GM13977 (cell line): ENCODE measurements at regions of chr7 and their contacts with region 1.

Region 1: DNA sequence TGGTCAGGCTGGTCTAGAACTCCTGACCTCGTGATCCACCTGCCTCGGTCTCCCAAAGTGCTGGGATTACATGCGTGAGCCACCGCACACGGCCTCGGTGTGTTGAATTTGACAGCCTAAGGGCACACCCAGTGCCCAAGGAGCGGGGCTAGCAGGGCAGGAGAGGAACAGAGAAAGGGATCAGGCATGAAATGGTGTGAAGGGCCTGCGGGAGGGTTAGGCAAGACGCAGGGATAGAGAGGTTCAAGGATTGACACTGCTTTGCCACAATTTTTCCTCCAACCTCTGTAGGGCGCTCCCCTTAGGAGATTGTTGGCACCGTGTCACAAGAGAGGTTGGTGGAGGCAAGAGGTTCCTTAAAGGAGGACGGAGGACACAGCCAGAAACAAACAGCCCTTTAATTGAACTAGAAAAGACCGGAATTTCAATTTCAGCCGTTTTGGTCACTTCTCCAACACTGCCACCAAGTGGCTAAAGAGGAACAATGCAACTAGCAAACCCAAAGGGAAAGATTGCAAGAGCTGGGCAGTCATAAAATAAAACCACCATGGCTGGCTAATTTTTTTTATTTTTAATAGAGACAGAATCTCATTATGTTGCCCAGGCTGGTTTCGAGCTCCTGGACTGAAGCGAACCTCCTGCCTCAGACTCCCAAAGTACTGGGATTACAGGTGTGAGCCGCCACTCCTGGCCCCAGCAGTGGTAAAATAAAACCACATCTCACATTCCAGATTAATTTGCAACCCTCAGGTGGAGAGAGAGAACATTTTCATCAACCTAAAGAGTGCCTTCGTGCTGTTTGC is 6.9 kb upstream of the CREB3L2 start:
- DNase-seq: peak; percentile 44
- CTCF ChIP-seq: peak; percentile 86

Region 2: GRCh38 chr7:137209151-137209817 is 799.5 kb before region 1 on chr7:
- in situ Hi-C with region 1: no loop called
- DNase-seq: no peak
- CTCF ChIP-seq: no peak

Region 3: GRCh38 chr7:137898839-137899721 is 109.7 kb before region 1 on chr7:
- in situ Hi-C with region 1: loop called (anchors 5 kb)
- DNase-seq: peak; percentile 68
- CTCF ChIP-seq: peak; percentile 98

Region 4: DNA sequence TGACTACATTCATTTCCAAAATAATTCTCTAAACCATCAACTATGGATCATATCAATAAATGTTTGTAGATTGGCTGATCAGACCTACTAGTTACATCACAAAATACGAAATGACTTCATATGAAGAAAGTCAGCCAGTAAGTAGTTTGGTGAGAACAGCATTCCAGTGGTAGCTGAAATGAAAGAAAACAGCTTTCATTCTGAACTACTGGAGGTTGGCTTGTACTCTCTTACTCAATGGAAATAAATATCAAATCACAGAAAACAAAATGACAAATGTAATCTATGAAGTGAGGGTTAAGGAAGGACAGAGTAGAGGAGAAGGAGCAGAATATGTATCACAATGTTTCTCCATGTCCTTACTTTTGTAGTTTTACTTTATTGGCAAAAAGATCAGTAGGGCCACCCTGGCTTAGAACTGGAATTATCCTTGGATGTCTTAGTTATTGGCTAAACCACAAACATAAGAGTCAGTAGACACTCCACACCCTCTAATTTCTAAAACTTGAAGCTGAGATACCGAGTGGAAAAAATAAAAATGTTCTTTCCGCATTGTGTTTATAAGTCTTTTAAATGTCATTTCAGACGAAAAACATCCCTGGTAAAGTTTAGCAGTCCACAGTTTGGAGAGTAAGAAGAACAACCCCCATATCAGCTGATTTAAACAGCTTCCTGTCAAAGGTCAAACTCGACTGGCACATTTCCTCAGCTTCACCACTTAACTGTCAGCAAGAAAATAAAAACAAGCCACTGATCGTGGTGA is 87.9 kb before region 1 on chr7:
- in situ Hi-C with region 1: no loop called
- DNase-seq: no peak
- CTCF ChIP-seq: no peak

Region 5: DNA sequence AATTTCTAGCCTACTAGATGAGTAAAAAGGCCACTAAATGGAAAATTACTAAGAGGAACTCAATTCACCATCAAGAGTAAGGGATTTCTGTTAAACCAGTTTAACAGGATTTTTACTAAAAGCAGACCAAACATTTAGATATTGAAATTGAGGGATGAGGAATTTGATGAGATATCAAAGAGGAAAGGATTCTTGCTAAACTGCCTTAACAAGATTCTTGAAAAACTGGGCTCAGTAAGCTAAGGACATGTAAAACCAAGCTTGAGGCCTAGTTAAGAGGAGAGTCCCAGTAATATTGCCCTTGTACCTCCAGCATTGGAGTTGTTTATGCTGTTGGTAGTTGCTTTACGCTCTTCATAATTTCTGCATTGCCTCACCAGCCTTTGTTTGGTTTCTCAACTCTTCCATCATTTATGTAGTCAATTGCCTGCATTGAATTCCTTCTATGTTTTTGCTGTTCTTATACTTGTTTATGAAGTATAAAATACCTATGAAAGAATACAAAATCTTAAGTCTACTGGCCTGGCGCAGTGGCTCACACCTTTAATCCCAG is 295.3 kb after region 1 on chr7:
- in situ Hi-C with region 1: no loop called
- DNase-seq: no peak
- CTCF ChIP-seq: no peak

Region 6: DNA sequence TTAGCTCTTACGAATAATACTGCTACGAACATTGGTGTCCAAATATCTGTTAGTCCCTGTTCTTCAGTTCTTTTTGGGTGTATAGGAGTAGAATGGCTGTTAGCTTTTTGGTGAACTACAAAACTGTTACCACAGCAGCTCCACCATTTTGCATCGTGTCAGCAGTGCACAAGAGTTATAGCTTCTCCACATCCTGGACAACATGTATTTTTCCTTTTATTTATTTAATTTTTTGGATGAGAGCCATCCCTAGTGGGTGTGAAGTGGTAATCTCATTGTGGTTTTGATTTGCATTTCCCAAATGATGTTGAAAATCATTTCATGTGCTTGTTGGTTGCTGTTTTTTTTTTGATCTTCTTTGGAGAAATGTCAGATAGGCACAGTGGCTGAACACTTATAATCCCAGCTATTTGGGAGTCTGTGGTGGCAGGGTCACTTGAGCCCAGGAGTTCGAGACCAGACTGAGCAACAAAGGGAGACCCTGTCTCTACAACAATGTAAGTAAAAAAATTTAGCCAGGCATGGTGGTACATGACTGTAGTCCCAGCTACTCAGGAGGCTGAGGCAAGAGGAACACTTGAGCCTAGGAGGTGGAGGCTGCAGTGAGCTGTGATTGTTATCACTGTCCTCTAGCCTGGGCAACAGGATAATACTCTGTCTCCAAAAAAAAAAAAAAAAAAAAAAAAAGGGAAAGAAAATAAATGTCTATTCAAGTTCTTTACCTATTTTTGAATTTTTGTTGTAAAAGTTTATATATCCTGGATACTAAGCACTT is 483.1 kb after region 1 on chr7:
- in situ Hi-C with region 1: no loop called
- DNase-seq: no peak
- CTCF ChIP-seq: no peak